Mucosa of descending colon (tissue), 3 donors: ENCODE measurements at regions of chr3 and their contacts with region 1.

Region 1: GRCh38 chr3:172476347-172476746 is 28.1 kb upstream of the GHSR start:
- DNase-seq: no peak
- ATAC-seq: no peak
- H3K4me3 ChIP-seq: no peak overlapping the region
- H3K4me1 ChIP-seq: no peaks in the 10 kb centered on the region
- CTCF ChIP-seq: no peak

Region 2: GRCh38 chr3:172249039-172249438 is 227.3 kb before region 1 on chr3:
- intact Hi-C with region 1: no loop called
- DNase-seq: no peak
- ATAC-seq: no peak
- H3K4me3 ChIP-seq: no peak overlapping the region
- H3K4me1 ChIP-seq: no peaks in the 10 kb centered on the region
- CTCF ChIP-seq: no peak

Region 3: GRCh38 chr3:172321035-172321434 is 155.3 kb before region 1 on chr3:
- intact Hi-C with region 1: no loop called
- DNase-seq: no peak
- ATAC-seq: no peak
- H3K4me3 ChIP-seq: no peak overlapping the region
- H3K4me1 ChIP-seq: peaks cover 5% of the 10 kb centered on the region
- CTCF ChIP-seq: no peak

Region 4: GRCh38 chr3:172595641-172596393 is 119.5 kb after region 1 on chr3:
- intact Hi-C with region 1: loop called in 1 of 2 experiments (anchors 10 kb)
- DNase-seq: peak in 1 of 3 donors; percentile 67
- ATAC-seq: peak; percentile 75
- H3K4me3 ChIP-seq: no peak overlapping the region
- H3K4me1 ChIP-seq: peaks cover 19% of the 10 kb centered on the region
- CTCF ChIP-seq: peak; percentile 76

Region 5: DNA sequence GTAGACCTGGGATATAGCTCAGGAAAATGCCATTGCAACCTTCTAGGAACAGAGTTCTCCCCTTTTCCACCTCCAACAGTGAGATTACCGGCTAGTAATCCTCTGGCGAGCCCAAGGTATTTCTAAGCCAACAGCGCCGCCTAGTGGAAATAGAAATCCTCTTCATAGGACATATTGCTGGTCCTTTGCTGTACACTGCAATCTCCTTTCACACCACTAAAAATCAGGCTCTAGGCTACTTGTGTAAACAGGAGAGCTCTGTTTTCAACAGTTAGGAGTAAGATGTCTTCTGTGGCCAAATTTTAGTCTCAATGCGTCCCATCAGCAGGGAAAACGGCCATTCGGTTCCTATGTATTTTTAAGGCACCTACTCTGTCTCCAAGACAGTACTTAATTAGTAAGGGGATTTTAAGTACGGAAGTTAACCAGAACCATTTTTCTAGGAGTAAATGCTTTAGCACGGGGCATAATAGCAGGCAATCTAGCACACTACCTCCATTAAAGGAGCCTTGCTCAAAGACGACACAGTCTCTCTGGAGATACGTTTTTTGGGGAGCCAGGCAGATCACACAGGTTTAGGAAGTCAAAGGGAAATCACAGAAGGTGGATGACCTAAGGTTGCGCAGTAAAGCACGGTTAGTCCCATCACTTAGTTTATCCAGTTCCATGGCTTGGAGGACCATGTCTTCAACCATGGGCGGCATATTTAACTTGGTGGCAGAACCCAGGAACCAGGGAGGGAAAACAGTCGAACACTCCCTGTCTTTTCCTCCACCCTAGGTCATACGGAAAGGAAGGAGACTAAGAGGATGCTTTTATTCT is 190.7 kb after region 1 on chr3:
- intact Hi-C with region 1: loop called in 1 of 2 experiments (anchors 10 kb)
- DNase-seq: peak in 2 of 3 donors; percentile 43 to 95
- ATAC-seq: peak; percentile 100
- H3K4me3 ChIP-seq: no peak overlapping the region
- H3K4me1 ChIP-seq: peaks cover 4% of the 10 kb centered on the region
- CTCF ChIP-seq: peak; percentile 56